Activated T-helper 1 cell treated with anti-CD3 and anti-CD28 coated beads, Interleukin-12 subunit alpha, Interleukin-12 subunit beta, Interleukin-2, Interleukin-4 antibody, amounts not matched to agents 30 ng/mL and 10 ng/mL and 1 ng/mL, durations not matched to agents 14 hours and 24 hours and 36 hours (primary cell): ENCODE measurements at regions of chr5 and their contacts with region 1.

Region 1: GRCh38 chr5:146124580-146124979 is 19.2 kb upstream of the PLAC8L1 start:
- DNase-seq: no peak
- H3K4me3 Mint-ChIP-seq: no peak overlapping the region
- H3K27ac Mint-ChIP-seq: no peak overlapping the region
- H3K4me1 Mint-ChIP-seq: peaks cover 7% of the 10 kb centered on the region
- H3K27me3 Mint-ChIP-seq: no peaks in the 10 kb centered on the region

Region 2: DNA sequence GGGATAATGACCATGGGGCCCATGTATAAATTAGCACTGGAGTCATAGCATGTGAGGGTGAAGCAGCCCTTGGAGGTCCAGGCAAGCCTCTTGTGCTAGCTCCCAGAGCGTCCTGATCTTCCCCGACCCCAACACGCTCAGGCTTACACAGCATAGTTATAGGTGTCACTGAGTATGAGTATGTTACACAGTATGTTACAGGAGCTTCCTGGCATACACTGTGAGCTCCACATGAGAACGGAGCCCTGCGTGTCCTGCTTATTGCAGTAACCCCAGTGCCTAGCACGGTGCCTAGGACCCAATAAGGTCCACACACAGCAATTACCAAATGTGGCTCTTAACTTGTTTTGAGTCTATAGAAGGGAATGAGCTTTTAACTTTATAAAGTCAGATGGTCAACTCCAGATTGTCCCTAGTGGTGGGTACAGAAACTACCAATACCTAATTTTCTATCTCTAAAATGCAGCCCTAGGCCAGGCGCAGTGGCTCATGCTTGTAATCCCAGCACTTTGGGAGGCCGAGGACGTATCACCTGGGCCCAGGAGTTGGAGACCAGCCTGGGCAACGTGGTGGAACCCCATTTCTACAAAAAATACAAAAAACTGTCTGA is 83.3 kb before region 1 on chr5:
- intact Hi-C with region 1: no loop called
- DNase-seq: no peak
- H3K4me3 Mint-ChIP-seq: no peak overlapping the region
- H3K27ac Mint-ChIP-seq: no peak overlapping the region
- H3K4me1 Mint-ChIP-seq: peaks cover 10% of the 10 kb centered on the region
- H3K27me3 Mint-ChIP-seq: peaks cover 14% of the 10 kb centered on the region

Region 3: DNA sequence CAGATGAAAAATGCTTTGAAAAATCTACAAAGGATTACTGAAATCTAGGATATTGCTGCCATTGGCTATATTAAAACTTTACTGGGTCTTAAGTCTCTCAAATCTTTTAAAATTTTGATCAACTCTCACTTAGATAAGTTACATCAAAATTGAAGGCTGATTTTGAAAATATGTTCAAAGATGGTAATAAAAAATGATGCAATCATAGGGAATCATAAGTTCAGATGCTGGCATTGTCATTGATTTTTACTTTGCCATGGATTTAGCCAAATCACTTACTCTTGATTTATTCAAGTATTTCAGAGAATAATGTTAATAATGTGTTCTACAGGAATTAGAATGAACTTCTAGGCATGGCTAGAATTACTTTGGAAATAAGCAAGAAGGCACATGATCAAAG is 33.7 kb after region 1 on chr5:
- intact Hi-C with region 1: loop called (anchors 5 kb)
- DNase-seq: no peak
- H3K4me3 Mint-ChIP-seq: no peak overlapping the region
- H3K27ac Mint-ChIP-seq: no peak overlapping the region
- H3K4me1 Mint-ChIP-seq: peaks cover 6% of the 10 kb centered on the region
- H3K27me3 Mint-ChIP-seq: no peaks in the 10 kb centered on the region

Region 4: DNA sequence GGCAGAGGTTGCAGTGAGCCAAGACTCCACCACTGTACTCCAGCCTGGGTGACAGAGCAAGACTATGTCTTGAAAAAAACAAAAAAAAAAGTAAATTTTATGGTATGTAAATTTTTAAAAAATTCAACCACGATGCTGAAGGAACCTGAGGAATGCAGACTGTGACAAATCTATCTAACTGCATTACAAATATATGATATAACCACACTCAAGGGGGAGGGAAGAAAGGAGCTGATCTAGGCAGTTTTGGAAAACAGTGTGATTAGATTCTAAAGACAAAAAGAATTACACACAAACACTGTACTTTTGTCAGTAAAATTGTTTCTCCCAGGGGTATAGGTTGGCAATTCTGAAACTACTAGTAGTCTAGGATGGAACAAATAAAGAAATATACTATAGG is 40.9 kb after region 1 on chr5:
- intact Hi-C with region 1: loop called (anchors 5 kb)
- DNase-seq: no peak
- H3K4me3 Mint-ChIP-seq: no peak overlapping the region
- H3K27ac Mint-ChIP-seq: no peak overlapping the region
- H3K4me1 Mint-ChIP-seq: peaks cover 4% of the 10 kb centered on the region
- H3K27me3 Mint-ChIP-seq: no peaks in the 10 kb centered on the region